ENCODE measurements at regions of chr7 and their contacts with region 1.

Region 1: DNA sequence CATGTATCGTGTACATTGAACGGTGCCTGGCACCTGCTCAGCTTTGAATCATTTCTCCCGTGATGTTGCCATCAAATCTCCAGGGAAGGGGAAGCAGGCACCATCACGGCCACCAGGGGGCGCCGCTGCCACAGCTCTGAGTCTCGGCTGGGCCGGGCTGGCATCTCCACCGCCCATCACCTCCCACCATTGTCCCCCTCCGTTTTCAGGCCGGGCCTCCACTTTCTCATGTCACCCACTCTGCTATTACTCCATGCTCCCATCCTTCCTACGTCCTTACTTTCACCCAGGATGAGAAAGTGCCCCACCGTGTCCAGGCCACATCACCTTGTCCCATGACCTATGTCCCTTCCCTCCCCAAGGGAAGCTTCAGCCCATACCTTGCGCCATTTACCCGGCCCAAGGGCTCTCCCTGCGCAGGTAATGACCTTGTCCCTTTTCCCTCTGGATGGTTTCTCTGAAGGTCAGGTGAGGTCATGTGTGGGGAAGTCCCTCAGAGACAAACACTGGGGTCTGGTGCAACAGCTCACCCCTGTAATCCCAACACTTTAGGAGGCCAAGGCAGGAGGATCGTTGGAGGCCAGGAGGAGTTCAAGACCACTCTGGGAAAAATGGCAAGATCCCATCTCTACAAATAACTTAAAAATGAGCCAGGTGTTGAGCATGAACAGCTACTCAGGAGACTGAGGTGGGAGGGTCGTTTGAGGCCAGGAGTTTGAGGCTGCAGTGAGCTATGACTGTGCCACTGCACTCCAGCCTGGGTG is 31.8 kb upstream of the OCM2 start:
- DNase-seq: peak; percentile 68 to 90 (median 82)
- H3K4me3 ChIP-seq: no peak overlapping the region
- H3K27ac ChIP-seq: no peak overlapping the region
- H3K4me1 ChIP-seq: no peaks in the 10 kb centered on the region
- H3K27me3 ChIP-seq: no peaks in the 10 kb centered on the region
- CTCF ChIP-seq: peak; percentile 83 to 98 (median 91)
- POLR2A ChIP-seq: no peak

Region 2: GRCh38 chr7:98106647-98107445 is 85.1 kb after region 1 on chr7 and contains the start of gene LMTK2:
- intact Hi-C with region 1: loop called (anchors 5 kb)
- DNase-seq: peak; percentile 94 to 98 (median 97)
- H3K4me3 ChIP-seq: peak within 1 kb of the TSS; percentile 92 to 99 (median 96)
- H3K27ac ChIP-seq: peak within 1 kb of the TSS in 4 of 5 donors; percentile 73 to 92 (median 87)
- H3K4me1 ChIP-seq: peaks cover 18 to 41% of the 10 kb centered on the region in 2 donors
- H3K27me3 ChIP-seq: no peaks in the 10 kb centered on the region
- CTCF ChIP-seq: peak; percentile 95 to 98 (median 97)
- POLR2A ChIP-seq: peak; percentile 72 to 92
- total RNA-seq, gene LMTK2: 9.4 to 36.2 (median 23.1) TPM

Region 3: GRCh38 chr7:98168181-98168905 is 146.6 kb after region 1 on chr7:
- intact Hi-C with region 1: loop called (anchors 2 to 5 kb)
- DNase-seq: peak; percentile 45 to 85 (median 64)
- H3K4me3 ChIP-seq: no peak overlapping the region
- H3K27ac ChIP-seq: no peak overlapping the region
- H3K4me1 ChIP-seq: peaks cover 8 to 12% of the 10 kb centered on the region in 2 donors
- H3K27me3 ChIP-seq: no peaks in the 10 kb centered on the region
- CTCF ChIP-seq: peak; percentile 75 to 91 (median 84)
- POLR2A ChIP-seq: no peak

Region 4: GRCh38 chr7:98240961-98241674 is 219.3 kb after region 1 on chr7:
- intact Hi-C with region 1: loop called in 1 of 2 experiments (anchors 5 kb)
- DNase-seq: peak; percentile 29 to 68 (median 48)
- H3K4me3 ChIP-seq: no peak overlapping the region
- H3K27ac ChIP-seq: no peak overlapping the region
- H3K4me1 ChIP-seq: peaks cover 0 to 2% of the 10 kb centered on the region in 2 donors
- H3K27me3 ChIP-seq: no peaks in the 10 kb centered on the region
- CTCF ChIP-seq: peak; percentile 47 to 66 (median 58)
- POLR2A ChIP-seq: no peak

Region 5: GRCh38 chr7:98629001-98629431 is 607.2 kb after region 1 on chr7:
- intact Hi-C with region 1: no loop called
- DNase-seq: no peak
- H3K4me3 ChIP-seq: no peak overlapping the region
- H3K27ac ChIP-seq: peak overlapping the region in 1 of 5 donors; percentile 16
- H3K4me1 ChIP-seq: no peaks in the 10 kb centered on the region
- H3K27me3 ChIP-seq: no peaks in the 10 kb centered on the region
- CTCF ChIP-seq: no peak
- POLR2A ChIP-seq: no peak